ENCODE measurements at regions of chr13 and their contacts with region 1.

Region 1: DNA sequence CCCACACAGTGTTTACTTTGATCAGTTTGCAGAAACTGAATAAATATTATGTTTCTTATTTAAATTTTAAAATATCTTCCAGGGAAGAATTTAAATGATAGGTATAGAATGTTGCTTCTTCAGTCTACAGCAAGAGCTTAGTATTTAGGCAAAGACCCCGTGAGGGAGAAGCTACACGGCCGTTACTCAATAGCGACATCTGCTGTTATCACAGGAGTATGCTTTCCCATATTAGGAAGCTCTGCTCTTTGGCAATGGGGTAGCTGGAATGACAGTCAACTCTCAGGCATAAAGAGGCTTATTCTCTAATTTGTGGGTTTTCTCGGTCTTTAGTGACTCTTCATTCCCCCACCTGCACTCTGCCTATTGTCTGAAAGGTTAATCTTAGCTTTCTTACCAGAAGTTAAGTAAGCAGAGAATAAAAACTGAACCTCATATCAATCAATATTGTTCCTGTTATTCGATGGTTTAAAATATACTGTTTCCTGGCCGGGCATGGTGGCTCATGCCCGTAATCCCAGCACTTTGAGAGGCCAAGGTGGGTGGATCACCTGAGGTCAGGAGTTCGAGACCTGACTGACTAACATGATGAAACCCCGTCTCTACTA is 13.2 kb upstream of the LHFPL6 start:
- DNase-seq: peak; percentile 26 to 44
- H3K4me3 ChIP-seq: no peak overlapping the region
- H3K27ac ChIP-seq: no peak overlapping the region
- H3K4me1 ChIP-seq: no peaks in the 10 kb centered on the region
- H3K27me3 ChIP-seq: no peaks in the 10 kb centered on the region
- CTCF ChIP-seq: peak; percentile 62 to 86 (median 70)
- POLR2A ChIP-seq: no peak

Region 2: DNA sequence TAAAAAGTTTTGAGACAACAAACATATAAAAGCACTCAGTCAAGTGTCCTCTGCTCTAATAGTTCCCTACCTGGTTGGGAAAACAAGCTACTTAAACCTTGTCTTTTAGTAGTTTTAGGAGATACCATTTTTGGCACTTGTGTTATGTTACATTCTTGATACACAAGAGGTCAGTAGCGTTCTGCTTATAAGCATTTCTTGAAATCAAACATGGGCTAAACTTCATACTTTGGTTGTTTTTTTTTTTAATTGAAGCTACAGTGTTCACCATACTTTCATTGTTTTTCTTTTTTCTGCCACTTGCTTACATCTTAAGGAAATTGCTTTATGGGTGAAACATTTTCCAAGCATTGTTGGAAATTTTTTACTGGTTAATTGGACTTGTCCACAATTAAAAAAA is 565.0 kb before region 1 on chr13:
- intact Hi-C with region 1: loop called (anchors 10 kb)
- DNase-seq: no peak
- H3K4me3 ChIP-seq: no peak overlapping the region
- H3K27ac ChIP-seq: no peak overlapping the region
- H3K4me1 ChIP-seq: peaks cover 13 to 15% of the 10 kb centered on the region in 2 donors
- H3K27me3 ChIP-seq: no peaks in the 10 kb centered on the region
- CTCF ChIP-seq: peak; percentile 8 to 80 (median 48)
- POLR2A ChIP-seq: no peak

Measured in thyroid gland (tissue), 4 donors.